ENCODE measurements at regions of chr1 and their contacts with region 1.

Region 1: DNA sequence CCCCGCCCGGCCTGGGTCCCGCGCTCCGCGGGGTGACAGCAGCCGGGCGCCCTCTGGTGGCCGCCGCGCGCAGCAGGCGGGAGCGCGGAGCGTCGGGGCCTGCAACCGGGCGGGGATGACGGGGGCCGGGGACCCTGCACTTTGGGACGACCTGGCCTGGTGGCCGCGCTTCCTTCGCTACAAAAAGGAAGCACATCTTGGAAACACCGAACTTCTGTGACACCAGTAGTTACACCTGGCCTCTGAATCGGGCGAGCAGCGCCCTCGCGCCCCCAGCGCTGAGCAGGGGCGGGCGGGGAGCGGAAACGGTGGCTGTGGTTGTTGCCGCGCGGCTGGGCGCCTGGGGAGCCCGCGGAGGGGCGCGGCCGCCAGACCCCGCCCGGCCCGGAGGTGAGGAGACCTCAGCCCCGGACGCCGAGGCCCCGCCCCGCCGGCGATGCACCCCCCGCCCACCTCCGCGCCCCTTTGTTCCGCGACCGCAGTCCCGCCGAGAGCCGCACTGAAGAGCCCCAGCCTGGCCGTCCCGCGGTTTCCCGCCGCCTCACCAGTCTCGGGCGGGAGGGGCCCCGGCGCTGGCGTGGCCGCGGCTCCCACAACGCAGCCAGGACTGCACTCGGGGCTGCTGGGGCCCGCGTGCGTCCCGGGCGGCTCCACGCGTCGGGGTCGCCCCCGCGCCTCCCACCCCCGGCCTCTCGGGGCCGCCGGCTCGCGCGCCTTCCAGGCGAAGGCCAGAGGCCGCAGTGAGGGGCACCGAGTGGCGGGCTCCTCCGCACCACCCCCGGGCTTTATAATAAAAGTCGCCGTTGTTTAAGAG is 59.3 kb downstream of the H3-3A start:
- DNase-seq: peak; percentile 80
- H3K4me3 ChIP-seq: peak overlapping the region; percentile 54 to 75 (median 68)
- H3K27ac ChIP-seq: peak overlapping the region; percentile 90 to 98 (median 94)
- H3K4me1 ChIP-seq: peaks cover 16 to 42% (median 29%) of the 10 kb centered on the region in 4 donors
- H3K27me3 ChIP-seq: no peaks in the 10 kb centered on the region
- CTCF ChIP-seq: peak; percentile 52 to 92 (median 87)
- EP300 ChIP-seq: no peak
- POLR2A ChIP-seq: peak; percentile 26

Region 2: DNA sequence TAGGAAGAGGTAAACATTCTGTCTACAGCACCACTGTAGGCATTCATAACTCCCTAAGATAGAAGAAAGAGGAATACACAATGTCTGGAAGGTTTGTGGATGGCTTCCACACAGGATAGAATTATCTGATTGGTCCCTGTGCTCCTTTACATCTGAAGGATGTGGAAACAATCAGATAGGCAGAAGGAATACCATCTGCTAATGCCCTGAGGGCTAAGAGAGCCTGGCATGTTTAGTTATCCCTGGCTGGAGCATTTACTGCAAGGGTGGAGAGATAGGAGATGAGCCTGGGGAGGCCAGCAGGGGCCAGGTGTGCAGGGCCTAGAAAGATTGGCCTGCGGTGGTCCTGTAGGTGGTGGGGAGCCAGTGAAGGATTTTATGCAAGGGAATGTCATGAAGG is 73.3 kb after region 1 on chr1:
- in situ Hi-C with region 1: no loop called
- intact Hi-C with region 1: loop called (anchors 5 kb)
- DNase-seq: no peak
- H3K4me3 ChIP-seq: no peak overlapping the region
- H3K27ac ChIP-seq: no peak overlapping the region
- H3K4me1 ChIP-seq: no peaks in the 10 kb centered on the region
- H3K27me3 ChIP-seq: no peaks in the 10 kb centered on the region
- CTCF ChIP-seq: no peak
- EP300 ChIP-seq: no peak
- POLR2A ChIP-seq: no peak

Measured in transverse colon (tissue), 4 donors.